CD14-positive monocyte (primary cell): ENCODE measurements at regions of chr19 and their contacts with region 1.

Region 1: DNA sequence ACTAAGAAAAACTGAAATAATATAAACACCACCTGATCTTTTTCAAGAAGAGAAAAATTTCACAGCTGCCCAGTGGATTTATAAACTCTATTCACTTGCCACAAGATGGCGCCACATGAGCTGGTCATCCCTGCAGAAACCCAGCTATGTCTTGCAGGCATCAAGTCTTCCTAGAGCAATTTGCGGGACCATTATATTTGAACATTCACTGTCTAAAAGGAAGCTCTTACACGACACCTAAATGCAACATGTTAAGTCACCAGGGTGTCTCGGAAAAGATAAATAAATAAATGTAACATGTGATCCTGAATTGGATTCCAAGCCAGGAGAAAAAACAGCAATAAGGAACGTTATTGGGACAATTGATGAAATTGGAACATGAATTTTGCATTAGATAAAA is 20.3 kb upstream of the AKT2 start:
- DNase-seq: peak; percentile 76 to 82 (median 79)
- H3K4me3 ChIP-seq: no peak overlapping the region
- H3K4me3 Mint-ChIP-seq: no peak overlapping the region
- H3K27ac ChIP-seq: no peak overlapping the region
- H3K27ac Mint-ChIP-seq: no peak overlapping the region
- H3K4me1 ChIP-seq: peaks cover 9 to 10% of the 10 kb centered on the region in 2 donors
- H3K4me1 Mint-ChIP-seq: peaks cover 5% of the 10 kb centered on the region
- H3K27me3 ChIP-seq: no peaks in the 10 kb centered on the region
- H3K27me3 Mint-ChIP-seq: peaks cover 2 to 5% (median 4%) of the 10 kb centered on the region in 3 donors
- CTCF ChIP-seq: peak; percentile 84

Region 2: GRCh38 chr19:40403262-40403984 is 98.0 kb after region 1 on chr19:
- intact Hi-C with region 1: loop called in 1 of 2 experiments (anchors 10 kb)
- DNase-seq: peak; percentile 71 to 87 (median 81)
- H3K4me3 ChIP-seq: peak overlapping the region; percentile 27 to 82 (median 76)
- H3K4me3 Mint-ChIP-seq: peak overlapping the region; percentile 89 to 99
- H3K27ac ChIP-seq: peak overlapping the region; percentile 48 to 67
- H3K27ac Mint-ChIP-seq: peak overlapping the region; percentile 77 to 97 (median 85)
- H3K4me1 ChIP-seq: peaks cover 23 to 31% of the 10 kb centered on the region in 2 donors
- H3K4me1 Mint-ChIP-seq: peaks cover 27% of the 10 kb centered on the region
- H3K27me3 ChIP-seq: no peaks in the 10 kb centered on the region
- H3K27me3 Mint-ChIP-seq: peaks cover 2 to 12% (median 2%) of the 10 kb centered on the region in 3 donors
- CTCF ChIP-seq: no peak

Region 3: GRCh38 chr19:40425450-40426287 is 120.3 kb after region 1 on chr19 and contains the start of gene SERTAD1:
- intact Hi-C with region 1: loop called in 1 of 2 experiments (anchors 10 kb)
- DNase-seq: peak; percentile 99
- H3K4me3 ChIP-seq: peak within 1 kb of the TSS; percentile 93 to 97 (median 94)
- H3K4me3 Mint-ChIP-seq: peak within 1 kb of the TSS; percentile 99
- H3K27ac ChIP-seq: peak within 1 kb of the TSS; percentile 97 to 99
- H3K27ac Mint-ChIP-seq: peak within 1 kb of the TSS; percentile 94 to 100 (median 98)
- H3K4me1 ChIP-seq: peaks cover 19 to 28% of the 10 kb centered on the region in 2 donors
- H3K4me1 Mint-ChIP-seq: peaks cover 21% of the 10 kb centered on the region
- H3K27me3 ChIP-seq: no peaks in the 10 kb centered on the region
- H3K27me3 Mint-ChIP-seq: peaks cover 0 to 3% (median 0%) of the 10 kb centered on the region in 3 donors
- CTCF ChIP-seq: peak; percentile 77
- polyA plus RNA-seq, gene SERTAD1: 21.0 to 55.9 (median 21.6) TPM

Region 4: GRCh38 chr19:40529093-40529954 is 223.9 kb after region 1 on chr19:
- intact Hi-C with region 1: loop called in 1 of 2 experiments (anchors 10 kb)
- DNase-seq: peak; percentile 69 to 83 (median 80)
- H3K4me3 ChIP-seq: peak overlapping the region; percentile 32 to 79 (median 43)
- H3K4me3 Mint-ChIP-seq: peak overlapping the region; percentile 71 to 89
- H3K27ac ChIP-seq: no peak overlapping the region
- H3K27ac Mint-ChIP-seq: peak overlapping the region in 2 of 7 donors; percentile 37 to 69
- H3K4me1 ChIP-seq: peaks cover 13 to 17% of the 10 kb centered on the region in 2 donors
- H3K4me1 Mint-ChIP-seq: peaks cover 18% of the 10 kb centered on the region
- H3K27me3 ChIP-seq: peaks cover 16 to 37% of the 10 kb centered on the region in 2 donors
- H3K27me3 Mint-ChIP-seq: peaks cover 36 to 54% (median 52%) of the 10 kb centered on the region in 3 donors
- CTCF ChIP-seq: peak; percentile 99

Region 5: GRCh38 chr19:40603389-40604135 is 298.2 kb after region 1 on chr19:
- intact Hi-C with region 1: loop called in 1 of 2 experiments (anchors 10 kb)
- DNase-seq: peak; percentile 84 to 92 (median 90)
- H3K4me3 ChIP-seq: peak overlapping the region in 2 of 3 experiments; percentile 34 to 73
- H3K4me3 Mint-ChIP-seq: peak overlapping the region; percentile 73 to 91
- H3K27ac ChIP-seq: no peak overlapping the region
- H3K27ac Mint-ChIP-seq: peak overlapping the region in 3 of 7 donors; percentile 34 to 54 (median 46)
- H3K4me1 ChIP-seq: peaks cover 50 to 73% of the 10 kb centered on the region in 2 donors
- H3K4me1 Mint-ChIP-seq: peaks cover 67% of the 10 kb centered on the region
- H3K27me3 ChIP-seq: peaks cover 43 to 92% of the 10 kb centered on the region in 2 donors
- H3K27me3 Mint-ChIP-seq: peaks cover 78 to 98% (median 95%) of the 10 kb centered on the region in 3 donors
- CTCF ChIP-seq: no peak

Region 6: GRCh38 chr19:40633207-40633606 is 327.8 kb after region 1 on chr19:
- intact Hi-C with region 1: loop called (anchors 2 to 5 kb)
- DNase-seq: no peak
- H3K4me3 ChIP-seq: no peak overlapping the region
- H3K4me3 Mint-ChIP-seq: peak overlapping the region in 1 of 2 donors; percentile 47
- H3K27ac ChIP-seq: no peak overlapping the region
- H3K27ac Mint-ChIP-seq: peak overlapping the region in 1 of 7 donors; percentile 14
- H3K4me1 ChIP-seq: peaks cover 0 to 4% of the 10 kb centered on the region in 2 donors
- H3K4me1 Mint-ChIP-seq: peaks cover 4% of the 10 kb centered on the region
- H3K27me3 ChIP-seq: peaks cover 0 to 5% of the 10 kb centered on the region in 2 donors
- H3K27me3 Mint-ChIP-seq: peaks cover 10 to 22% (median 10%) of the 10 kb centered on the region in 3 donors
- CTCF ChIP-seq: no peak

Region 7: GRCh38 chr19:40640744-40641143 is 335.3 kb after region 1 on chr19:
- intact Hi-C with region 1: loop called in 1 of 2 experiments (anchors 2 kb)
- DNase-seq: no peak
- H3K4me3 ChIP-seq: no peak overlapping the region
- H3K4me3 Mint-ChIP-seq: no peak overlapping the region
- H3K27ac ChIP-seq: no peak overlapping the region
- H3K27ac Mint-ChIP-seq: no peak overlapping the region
- H3K4me1 ChIP-seq: no peaks in the 10 kb centered on the region
- H3K4me1 Mint-ChIP-seq: peaks cover 4% of the 10 kb centered on the region
- H3K27me3 ChIP-seq: no peaks in the 10 kb centered on the region
- H3K27me3 Mint-ChIP-seq: peaks cover 4 to 18% (median 5%) of the 10 kb centered on the region in 3 donors
- CTCF ChIP-seq: no peak